A673 (cell line): ENCODE measurements at regions of chr5 and their contacts with region 1.

Region 1: DNA sequence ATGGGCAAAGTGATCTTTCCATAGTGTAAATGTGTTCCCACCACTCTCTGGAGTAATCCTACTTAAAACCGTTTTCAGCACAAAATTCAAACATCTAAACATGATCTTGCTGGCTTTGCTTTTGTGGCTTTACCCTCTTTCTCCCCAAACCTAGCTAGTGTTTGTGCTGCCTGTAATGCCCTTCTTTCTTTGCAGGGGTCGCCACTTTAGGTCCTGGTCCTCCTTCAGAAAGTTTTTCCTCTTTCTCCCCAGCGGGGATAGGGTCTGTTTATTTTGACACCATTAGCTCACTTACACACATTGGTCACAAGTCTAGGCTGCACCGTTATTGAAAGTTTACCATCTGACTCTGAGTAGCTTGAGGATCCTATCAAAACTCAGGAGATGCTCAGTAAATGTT is 736 bp upstream of the HSD17B4 start:
- DNase-seq: no peak
- H3K4me3 ChIP-seq: no peak overlapping the region
- H3K27ac ChIP-seq: no peak overlapping the region
- H3K4me1 ChIP-seq: peaks cover 6% of the 10 kb centered on the region
- H3K27me3 ChIP-seq: no peaks in the 10 kb centered on the region
- CTCF ChIP-seq: no peak

Region 2: GRCh38 chr5:119435436-119436132 is 16.0 kb before region 1 on chr5:
- CTCF ChIA-PET with region 1: no interaction called
- POLR2A ChIA-PET with region 1: no interaction called
- intact Hi-C with region 1: no loop called
- DNase-seq: peak; percentile 72
- H3K4me3 ChIP-seq: no peak overlapping the region
- H3K27ac ChIP-seq: no peak overlapping the region
- H3K4me1 ChIP-seq: no peaks in the 10 kb centered on the region
- H3K27me3 ChIP-seq: no peaks in the 10 kb centered on the region
- CTCF ChIP-seq: peak; percentile 80

Region 3: GRCh38 chr5:119483155-119483554 is 31.6 kb after region 1 on chr5:
- CTCF ChIA-PET with region 1: no interaction called
- POLR2A ChIA-PET with region 1: interaction called, 24 read pairs
- intact Hi-C with region 1: no loop called
- DNase-seq: no peak
- H3K4me3 ChIP-seq: no peak overlapping the region
- H3K27ac ChIP-seq: no peak overlapping the region
- H3K4me1 ChIP-seq: no peaks in the 10 kb centered on the region
- H3K27me3 ChIP-seq: no peaks in the 10 kb centered on the region
- CTCF ChIP-seq: no peak